ENCODE measurements at regions of chr11 and their contacts with region 1.

Region 1: DNA sequence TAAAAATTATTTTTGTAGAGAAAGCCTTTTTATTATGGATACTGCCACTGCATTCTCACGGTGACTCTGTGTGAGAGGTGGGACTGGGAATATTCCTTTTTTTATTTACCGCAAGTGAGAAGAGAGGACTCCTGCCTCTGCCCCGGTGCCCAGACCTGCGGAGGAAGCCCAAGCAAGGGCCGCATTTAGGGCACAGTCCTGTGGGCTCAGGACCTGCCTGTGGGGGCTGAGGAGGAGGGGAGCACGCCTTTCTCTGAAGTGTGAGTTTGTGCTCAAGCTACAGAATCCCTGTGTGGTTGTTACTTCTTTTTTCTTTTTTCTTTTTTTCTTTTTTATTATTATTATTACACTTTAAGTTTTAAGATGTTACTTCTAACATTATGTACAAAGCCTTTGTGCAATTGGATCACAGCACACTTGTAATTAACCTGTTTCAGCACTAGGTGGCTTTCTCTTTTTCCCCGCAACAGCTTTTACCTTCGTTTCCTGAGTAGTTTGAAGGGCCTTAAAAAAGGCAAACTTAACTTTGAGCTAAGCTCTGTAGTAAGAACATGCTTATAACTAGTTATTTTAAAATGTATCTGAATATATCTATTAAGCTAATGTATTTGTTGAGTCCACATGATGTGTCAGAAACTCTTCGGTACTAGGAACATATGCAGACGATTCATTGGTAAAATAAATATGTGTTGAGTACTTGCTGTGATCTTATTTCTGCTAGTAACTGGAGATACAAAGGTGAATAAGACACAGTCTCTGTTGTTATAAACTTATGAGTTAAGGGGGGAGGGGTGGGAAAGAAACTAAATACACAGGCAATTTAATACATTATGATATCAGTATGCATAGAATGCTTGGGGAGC is 18.3 kb downstream of the AMOTL1 start:
- DNase-seq: no peak
- H3K4me3 ChIP-seq: no peak overlapping the region
- CTCF ChIP-seq: peak; percentile 35

Region 2: DNA sequence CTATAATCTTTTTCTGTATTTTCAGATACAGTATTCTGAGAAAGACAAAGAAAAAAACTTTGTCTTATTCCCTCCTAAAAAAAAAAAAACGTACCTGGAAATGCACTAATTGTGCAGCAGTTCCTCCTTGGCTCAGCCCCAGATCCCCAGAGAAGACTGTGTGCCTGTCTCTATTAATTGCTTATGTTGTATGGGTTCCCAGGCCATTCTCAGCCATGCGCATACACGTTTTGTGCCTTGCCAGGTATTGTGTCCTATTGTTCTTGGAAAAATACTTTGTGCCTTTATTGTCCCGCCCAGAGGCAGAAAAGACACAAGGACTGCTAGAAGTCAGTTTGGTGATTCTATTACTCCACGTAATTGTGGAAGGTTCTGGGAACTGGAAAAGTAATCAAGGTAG is 128.1 kb before region 1 on chr11:
- CTCF ChIA-PET with region 1: no interaction called
- POLR2A ChIA-PET with region 1: no interaction called
- DNase-seq: no peak
- H3K4me3 ChIP-seq: no peak overlapping the region
- CTCF ChIP-seq: no peak

Region 3: DNA sequence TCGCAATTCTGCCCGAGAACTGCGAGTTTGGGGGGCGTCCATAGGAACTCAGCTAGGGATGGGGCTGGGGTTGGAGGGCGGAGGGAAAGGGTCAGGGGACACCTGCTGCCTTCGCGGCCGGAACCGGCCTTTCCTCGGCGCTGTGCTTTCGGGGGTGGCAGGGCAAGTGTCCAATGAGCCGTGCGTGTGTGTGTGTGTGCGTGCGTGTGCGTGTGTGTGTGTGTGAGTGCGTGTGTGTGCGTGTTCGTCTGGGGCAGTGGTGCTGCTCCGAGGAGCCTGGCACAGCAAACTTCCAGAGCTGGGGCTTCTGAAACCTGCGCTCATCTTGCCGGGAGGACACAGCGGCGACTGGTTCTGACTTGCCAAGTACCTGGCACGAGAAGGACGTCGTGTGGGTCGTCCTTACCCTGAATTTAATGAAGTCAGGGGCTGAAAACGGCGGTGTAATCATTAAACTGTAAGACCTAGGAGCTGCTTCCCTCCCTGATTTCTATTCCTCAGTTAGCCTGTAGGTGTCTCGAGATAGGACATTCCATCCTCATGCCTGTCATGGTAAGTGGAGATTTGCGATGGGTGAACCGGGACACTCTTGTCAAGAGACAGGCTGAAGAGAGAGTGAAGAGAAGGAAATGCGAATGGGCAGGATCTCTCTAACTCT is 45.3 kb before region 1 on chr11:
- CTCF ChIA-PET with region 1: interaction called, 16 read pairs
- POLR2A ChIA-PET with region 1: no interaction called
- DNase-seq: no peak
- H3K4me3 ChIP-seq: peak overlapping the region; percentile 59
- CTCF ChIP-seq: peak; percentile 56

Region 4: GRCh38 chr11:94767761-94768601 is 18.5 kb before region 1 on chr11 and contains the start of gene AMOTL1:
- CTCF ChIA-PET with region 1: interaction called, 12 read pairs
- POLR2A ChIA-PET with region 1: interaction called, 4 read pairs
- DNase-seq: no peak
- H3K4me3 ChIP-seq: peak within 1 kb of the TSS; percentile 85
- CTCF ChIP-seq: no peak

Region 5: GRCh38 chr11:94806014-94806413 is 19.5 kb after region 1 on chr11:
- CTCF ChIA-PET with region 1: interaction called, 15 read pairs
- POLR2A ChIA-PET with region 1: no interaction called
- DNase-seq: no peak
- H3K4me3 ChIP-seq: no peak overlapping the region
- CTCF ChIP-seq: no peak

Measured in AG04449 (cell line).